Posterior cingulate gyrus (tissue), 11 donors: ENCODE measurements at regions of chr12 and their contacts with region 1.

Region 1: GRCh38 chr12:4763549-4763948 is 43.3 kb downstream of the GALNT8 start:
- DNase-seq: no peak

Region 2: DNA sequence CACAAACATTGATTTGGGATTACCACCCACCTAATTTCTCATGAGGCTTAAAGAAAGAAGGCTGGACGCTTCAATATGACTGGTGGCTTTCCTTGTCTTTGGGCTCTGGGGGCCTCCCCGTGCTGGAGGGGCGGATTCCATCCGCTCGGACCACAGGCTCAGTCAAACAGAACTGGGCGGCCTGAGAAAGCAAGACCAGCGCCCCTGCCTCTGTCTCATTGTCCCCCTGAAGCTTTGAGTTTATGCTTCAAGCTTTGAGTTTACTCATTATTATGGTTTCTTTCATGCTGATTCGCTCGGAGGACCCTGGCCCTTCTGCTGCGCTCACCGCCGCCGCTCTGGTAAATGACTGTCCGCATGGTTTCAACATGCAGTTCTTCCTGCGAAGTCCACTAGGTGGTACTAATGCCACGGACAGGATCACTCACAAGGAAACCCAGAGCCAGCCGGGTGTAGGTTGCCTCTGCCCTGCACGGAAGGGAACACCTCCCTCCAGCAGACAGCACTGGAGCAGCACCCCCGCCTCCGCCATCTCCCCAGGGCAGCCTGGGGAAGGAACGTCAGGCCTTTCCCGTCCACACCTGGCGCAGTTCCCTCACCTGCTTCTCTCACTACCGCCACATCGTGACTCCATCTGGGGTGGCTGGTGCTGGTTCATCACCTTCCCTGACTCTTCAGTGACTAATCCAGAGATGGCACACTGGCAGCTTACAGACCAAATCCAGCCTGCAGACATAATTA is 455.8 kb before region 1 on chr12:
- intact Hi-C with region 1: loop called (anchors 5 kb)
- DNase-seq: peak; percentile 43 to 96 (median 72)

Region 3: DNA sequence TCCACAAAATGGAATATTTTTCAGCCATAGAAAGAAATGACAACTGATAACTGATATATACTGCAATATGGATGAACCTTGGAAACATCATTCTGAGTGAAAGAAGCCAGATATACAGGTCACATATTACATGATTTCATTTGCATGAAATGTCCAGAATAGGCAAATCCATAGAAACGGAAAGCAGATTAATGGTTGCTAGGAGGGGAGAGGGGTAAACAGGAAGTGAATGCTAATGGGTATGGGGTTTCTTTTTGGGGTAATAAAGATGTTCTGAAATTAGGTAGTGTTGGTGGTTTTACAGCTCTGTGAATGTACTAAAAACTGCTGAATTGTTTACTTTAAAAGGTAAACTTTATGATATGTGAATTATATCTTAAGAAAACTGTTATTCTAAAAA is 218.4 kb before region 1 on chr12:
- intact Hi-C with region 1: no loop called
- DNase-seq: no peak

Region 4: DNA sequence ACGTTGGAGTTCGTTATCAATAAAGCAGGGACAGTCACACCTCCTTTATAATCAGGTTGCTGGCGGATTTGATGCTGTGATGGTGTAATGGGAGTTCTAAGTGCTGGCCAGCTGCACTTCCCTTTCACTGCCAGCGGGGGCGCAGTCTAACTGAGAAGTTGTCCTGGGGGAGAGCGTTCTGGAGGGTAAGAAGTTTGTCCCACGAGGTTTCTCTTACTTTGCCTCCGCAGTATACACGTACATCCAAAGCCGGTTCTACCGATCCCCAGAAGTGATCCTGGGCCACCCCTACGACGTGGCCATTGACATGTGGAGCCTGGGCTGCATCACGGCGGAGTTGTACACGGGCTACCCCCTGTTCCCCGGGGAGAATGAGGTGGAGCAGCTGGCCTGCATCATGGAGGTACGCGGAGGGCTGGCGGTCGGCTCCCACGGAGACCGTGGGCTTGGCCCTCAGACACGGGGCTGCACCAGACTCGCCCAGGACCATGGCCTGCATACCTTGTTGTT is 158.8 kb before region 1 on chr12:
- intact Hi-C with region 1: loop called (anchors 5 kb)
- DNase-seq: peak; percentile 68 to 97 (median 80)